ENCODE measurements at regions of chr4 and their contacts with region 1.

Region 1: GRCh38 chr4:14066979-14067378 is 439.5 kb upstream of the BOD1L1 start:
- DNase-seq: no peak
- H3K4me3 ChIP-seq: no peak overlapping the region
- H3K27ac ChIP-seq: no peak overlapping the region
- H3K4me1 ChIP-seq: no peaks in the 10 kb centered on the region
- H3K27me3 ChIP-seq: no peaks in the 10 kb centered on the region
- CTCF ChIP-seq: no peak
- EP300 ChIP-seq: no peak
- POLR2A ChIP-seq: no peak

Region 2: DNA sequence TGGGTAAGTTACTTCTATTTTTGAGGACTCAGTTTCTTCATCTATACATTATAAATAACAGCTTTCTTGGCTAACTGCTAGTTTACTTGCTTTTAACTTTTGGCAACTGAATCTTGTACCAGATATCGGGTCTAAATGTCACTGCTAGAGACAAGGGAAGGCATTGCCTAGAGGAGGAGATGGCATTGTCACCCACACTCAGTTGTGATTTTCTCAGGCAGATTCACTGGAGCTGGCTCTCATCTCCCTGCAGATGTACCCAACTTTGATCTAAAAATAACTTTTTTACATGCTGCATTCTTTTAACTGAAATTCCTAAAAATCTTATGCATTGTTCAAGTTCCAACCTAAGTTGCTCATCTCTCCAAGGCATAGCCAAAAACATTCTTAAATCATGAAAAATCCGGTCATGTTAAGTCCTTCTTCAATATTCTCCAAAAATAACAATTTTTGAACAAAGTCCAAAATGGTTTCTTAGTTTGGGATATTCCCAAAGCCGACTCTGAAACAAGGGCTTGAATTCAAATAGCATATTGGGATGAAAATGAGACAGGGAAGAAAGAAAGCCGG is 29.5 kb after region 1 on chr4:
- intact Hi-C with region 1: loop called in 1 of 4 experiments (anchors 1 kb)
- DNase-seq: no peak
- H3K4me3 ChIP-seq: no peak overlapping the region
- H3K27ac ChIP-seq: no peak overlapping the region
- H3K4me1 ChIP-seq: no peaks in the 10 kb centered on the region
- H3K27me3 ChIP-seq: no peaks in the 10 kb centered on the region
- CTCF ChIP-seq: no peak
- EP300 ChIP-seq: no peak
- POLR2A ChIP-seq: no peak